Heart left ventricle (tissue), 16 donors: ENCODE measurements at regions of chr21 and their contacts with region 1.

Region 1: DNA sequence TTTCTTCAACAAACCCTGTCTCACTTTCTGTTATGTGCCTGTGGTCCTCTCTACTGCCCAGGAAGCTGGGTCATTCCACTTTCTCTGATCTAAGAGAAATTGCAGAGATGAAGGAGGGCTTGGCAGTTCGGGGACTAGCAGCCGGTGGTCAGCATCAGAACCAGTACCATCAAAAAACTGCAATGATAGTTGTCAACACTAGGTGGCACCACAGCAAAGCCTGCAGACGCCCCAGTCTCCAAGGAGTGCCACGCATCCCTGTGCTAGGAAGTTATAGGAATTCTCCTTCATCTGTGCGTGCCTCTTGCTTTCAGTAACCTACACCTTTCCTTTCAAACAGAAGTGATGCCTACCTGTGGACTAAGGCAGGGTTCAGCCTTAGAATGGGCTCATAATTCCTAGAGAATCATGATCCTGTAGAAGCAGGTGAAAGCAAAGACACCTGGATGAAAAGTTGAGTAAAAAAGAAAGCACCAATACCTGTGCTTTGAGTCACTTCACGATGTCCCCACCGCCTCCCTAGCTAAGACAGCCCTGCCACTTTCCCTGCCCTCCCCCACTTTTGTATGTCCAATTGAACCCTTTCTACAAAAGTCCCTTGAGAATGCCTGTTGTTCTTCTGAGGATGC is 129.2 kb downstream of the ADAMTS1 start:
- DNase-seq: peak in 3 of 5 donors; percentile 31 to 41 (median 32)
- ATAC-seq: peak; percentile 52 to 83 (median 62)
- H3K4me3 ChIP-seq: no peak overlapping the region
- H3K27ac ChIP-seq: no peak overlapping the region
- H3K4me1 ChIP-seq: peaks cover 0 to 8% (median 0%) of the 10 kb centered on the region in 12 donors
- H3K27me3 ChIP-seq: no peaks in the 10 kb centered on the region
- CTCF ChIP-seq: peak; percentile 71 to 89 (median 82)
- POLR2A ChIP-seq: no peak

Region 2: DNA sequence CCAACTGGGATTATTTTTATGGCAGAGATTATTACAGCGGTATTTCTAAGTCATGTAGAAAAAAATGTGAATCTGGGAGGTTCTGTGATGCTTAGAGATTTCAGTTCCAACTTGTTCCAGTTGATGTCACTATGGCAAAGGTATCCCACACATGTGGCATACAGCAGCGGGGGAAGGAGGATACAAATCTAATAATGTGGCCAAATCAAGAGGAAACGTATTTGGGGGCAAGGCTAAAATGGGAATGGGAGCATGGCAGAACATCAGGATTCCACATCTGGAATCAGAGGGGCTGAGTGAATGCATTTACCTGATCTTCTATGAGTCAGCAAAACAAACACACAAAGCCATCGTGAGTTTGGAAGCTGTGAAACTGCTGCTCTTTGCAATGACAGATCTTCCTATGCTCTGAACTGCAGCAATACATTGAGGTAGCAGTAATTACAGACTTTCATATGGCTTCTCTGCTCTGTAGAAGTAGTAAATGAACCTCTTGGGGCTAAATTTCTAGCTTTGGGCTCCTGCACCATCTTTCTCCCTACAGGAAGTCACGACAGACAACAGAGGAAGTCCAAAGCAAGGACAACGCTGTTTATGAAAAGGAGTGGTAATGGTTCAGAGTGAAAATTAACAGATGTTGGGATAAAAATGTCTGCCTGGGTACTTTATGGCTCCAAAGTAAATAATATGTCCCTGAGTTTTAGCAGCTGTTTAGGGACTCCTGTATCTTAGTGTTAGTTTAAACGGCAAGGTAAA is 925.7 kb before region 1 on chr21:
- intact Hi-C with region 1: loop called in 4 of 10 experiments (anchors 5 to 10 kb)
- DNase-seq: no peak
- ATAC-seq: peak in 2 of 4 donors; percentile 57 to 69
- H3K4me3 ChIP-seq: peak overlapping the region in 9 of 12 donors; percentile 20 to 52 (median 41)
- H3K27ac ChIP-seq: peak overlapping the region in 3 of 12 donors; percentile 4 to 69 (median 24)
- H3K4me1 ChIP-seq: peaks cover 0 to 12% (median 0%) of the 10 kb centered on the region in 12 donors
- H3K27me3 ChIP-seq: peaks cover 0 to 9% (median 0%) of the 10 kb centered on the region in 9 donors
- CTCF ChIP-seq: peak in 11 of 12 donors; percentile 5 to 61 (median 37)
- POLR2A ChIP-seq: no peak

Region 3: DNA sequence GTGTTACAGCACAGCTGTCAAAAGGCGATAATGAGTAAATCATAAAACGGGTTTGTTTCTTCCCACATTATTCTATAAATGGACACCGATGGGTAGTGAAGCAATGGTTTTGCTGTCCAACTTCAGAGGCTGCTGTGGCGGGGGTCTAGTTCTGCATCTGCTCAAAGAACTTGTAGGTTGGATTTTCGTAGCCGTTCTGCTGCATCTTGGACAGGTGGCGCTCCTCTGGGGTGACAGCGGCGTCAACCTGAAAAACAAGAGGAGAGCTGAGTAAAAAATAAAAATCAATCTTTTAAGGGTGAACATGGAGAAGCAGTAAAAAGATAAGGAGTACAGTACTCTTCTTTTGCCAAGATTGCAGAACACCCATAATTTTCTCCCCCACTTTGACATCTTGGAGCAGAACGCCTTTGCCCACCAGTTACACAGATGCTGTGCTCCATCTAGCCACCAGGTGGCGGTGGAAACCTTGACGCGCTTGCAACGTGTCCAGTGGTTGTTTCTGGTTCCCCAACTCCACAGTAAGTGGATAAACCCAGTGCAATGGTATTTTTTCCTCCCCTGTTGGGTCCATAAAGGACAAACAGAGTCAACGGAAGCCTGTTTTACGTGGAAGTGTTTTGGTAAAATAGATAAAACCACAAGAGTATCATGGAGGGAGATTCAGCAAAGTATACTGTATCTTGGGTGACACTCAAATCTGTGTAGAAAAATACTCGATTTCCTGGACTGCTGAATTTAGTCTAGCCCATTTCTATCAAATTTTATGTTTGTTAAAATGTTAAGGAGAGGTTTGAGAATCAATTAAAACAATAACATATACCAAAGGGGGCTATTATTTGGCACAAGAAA is 834.2 kb before region 1 on chr21:
- intact Hi-C with region 1: loop called (anchors 2 to 5 kb)
- DNase-seq: peak; percentile 49 to 81 (median 68)
- ATAC-seq: peak; percentile 48 to 76 (median 76)
- H3K4me3 ChIP-seq: no peak overlapping the region
- H3K27ac ChIP-seq: no peak overlapping the region
- H3K4me1 ChIP-seq: peaks cover 0 to 20% (median 4%) of the 10 kb centered on the region in 12 donors
- H3K27me3 ChIP-seq: no peaks in the 10 kb centered on the region
- CTCF ChIP-seq: peak; percentile 88 to 98 (median 94)
- POLR2A ChIP-seq: no peak

Region 4: GRCh38 chr21:26177187-26177586 is 538.8 kb before region 1 on chr21:
- intact Hi-C with region 1: loop called in 6 of 10 experiments (anchors 5 to 10 kb)
- DNase-seq: peak in 4 of 5 donors; percentile 29 to 54 (median 31)
- ATAC-seq: peak in 3 of 4 donors; percentile 47 to 90 (median 84)
- H3K4me3 ChIP-seq: no peak overlapping the region
- H3K27ac ChIP-seq: no peak overlapping the region
- H3K4me1 ChIP-seq: peaks cover 0 to 11% (median 0%) of the 10 kb centered on the region in 12 donors
- H3K27me3 ChIP-seq: no peaks in the 10 kb centered on the region
- CTCF ChIP-seq: no peak
- POLR2A ChIP-seq: no peak

Region 5: GRCh38 chr21:26185021-26185420 is 531.0 kb before region 1 on chr21:
- intact Hi-C with region 1: loop called in 1 of 10 experiments (anchors 10 kb)
- DNase-seq: no peak
- ATAC-seq: no peak
- H3K4me3 ChIP-seq: no peak overlapping the region
- H3K27ac ChIP-seq: no peak overlapping the region
- H3K4me1 ChIP-seq: no peaks in the 10 kb centered on the region
- H3K27me3 ChIP-seq: no peaks in the 10 kb centered on the region
- CTCF ChIP-seq: no peak
- POLR2A ChIP-seq: no peak

Region 6: DNA sequence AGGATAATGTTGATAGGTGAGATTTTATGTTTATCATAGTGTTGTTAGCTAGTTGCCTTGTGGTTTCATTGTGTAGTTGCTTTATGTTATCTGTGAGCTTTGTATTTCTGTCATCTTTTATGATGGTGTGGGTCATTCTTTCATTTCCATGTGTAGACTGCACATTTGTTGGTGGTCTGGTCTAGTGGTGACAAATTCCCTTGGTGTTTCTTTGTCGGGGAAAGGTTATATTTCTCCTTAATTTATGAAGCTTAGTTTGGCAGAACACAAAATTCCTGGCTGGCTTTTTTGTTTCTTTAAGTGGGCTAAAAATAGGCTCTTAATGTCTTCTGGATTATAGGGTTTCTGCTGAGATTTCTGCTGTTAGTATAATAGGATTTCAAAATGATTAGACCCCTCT is 598.1 kb after region 1 on chr21:
- intact Hi-C with region 1: no loop called
- DNase-seq: no peak
- ATAC-seq: no peak
- H3K4me3 ChIP-seq: no peak overlapping the region
- H3K27ac ChIP-seq: no peak overlapping the region
- H3K4me1 ChIP-seq: no peaks in the 10 kb centered on the region
- H3K27me3 ChIP-seq: no peaks in the 10 kb centered on the region
- CTCF ChIP-seq: no peak
- POLR2A ChIP-seq: no peak